ENCODE measurements at regions of chr15 and their contacts with region 1.

Region 1: GRCh38 chr15:91919014-91919534 is 65.6 kb downstream of the SLCO3A1 start:
- DNase-seq: no peak
- ATAC-seq: no peak
- H3K4me3 Mint-ChIP-seq: no peak overlapping the region
- H3K27ac Mint-ChIP-seq: no peak overlapping the region
- H3K4me1 Mint-ChIP-seq: peaks cover 11% of the 10 kb centered on the region
- H3K27me3 Mint-ChIP-seq: no peaks in the 10 kb centered on the region
- CTCF ChIP-seq: no peak

Region 2: GRCh38 chr15:92034227-92034626 is 115.2 kb after region 1 on chr15:
- CTCF ChIA-PET with region 1: no interaction called
- POLR2A ChIA-PET with region 1: no interaction called
- intact Hi-C with region 1: no loop called
- DNase-seq: no peak
- ATAC-seq: no peak
- H3K4me3 Mint-ChIP-seq: no peak overlapping the region
- H3K27ac Mint-ChIP-seq: no peak overlapping the region
- H3K4me1 Mint-ChIP-seq: no peaks in the 10 kb centered on the region
- H3K27me3 Mint-ChIP-seq: no peaks in the 10 kb centered on the region
- CTCF ChIP-seq: no peak

Region 3: GRCh38 chr15:92178911-92179310 is 259.8 kb after region 1 on chr15:
- CTCF ChIA-PET with region 1: no interaction called
- POLR2A ChIA-PET with region 1: interaction called, 11 read pairs
- intact Hi-C with region 1: no loop called
- DNase-seq: no peak
- ATAC-seq: no peak
- H3K4me3 Mint-ChIP-seq: no peak overlapping the region
- H3K27ac Mint-ChIP-seq: no peak overlapping the region
- H3K4me1 Mint-ChIP-seq: no peaks in the 10 kb centered on the region
- H3K27me3 Mint-ChIP-seq: no peaks in the 10 kb centered on the region
- CTCF ChIP-seq: no peak

Region 4: DNA sequence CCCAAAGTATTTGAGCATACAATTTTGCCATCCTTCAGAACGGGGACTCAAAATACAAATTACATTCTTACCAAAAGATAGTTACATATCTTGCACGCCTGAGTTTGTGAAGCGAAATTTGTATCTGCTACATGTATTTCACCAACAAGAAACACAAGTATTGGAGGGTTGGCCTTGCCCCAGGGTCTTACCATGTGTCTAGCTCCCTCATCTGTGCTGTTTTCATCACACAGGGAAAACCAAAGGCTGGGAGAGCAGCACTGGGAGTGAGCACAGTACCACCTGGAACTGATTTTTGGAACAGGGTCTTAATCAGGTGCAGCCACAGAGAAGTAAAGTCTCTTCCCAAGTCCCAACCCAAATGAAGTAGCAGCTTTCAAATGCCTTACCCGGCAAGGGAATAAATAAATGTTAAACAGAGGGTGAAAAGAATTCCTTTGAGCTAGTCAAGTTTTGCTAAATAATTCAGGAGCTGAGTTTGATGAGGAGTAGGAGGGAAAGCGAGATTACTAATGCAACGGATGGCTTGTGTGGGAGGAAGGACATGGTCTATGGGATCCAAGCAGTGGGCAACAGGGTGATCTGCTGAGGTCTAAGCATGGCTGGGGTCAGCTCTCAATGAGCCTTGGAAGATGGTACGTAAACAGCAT is 270.0 kb after region 1 on chr15:
- CTCF ChIA-PET with region 1: no interaction called
- POLR2A ChIA-PET with region 1: no interaction called
- intact Hi-C with region 1: no loop called
- DNase-seq: no peak
- ATAC-seq: no peak
- H3K4me3 Mint-ChIP-seq: no peak overlapping the region
- H3K27ac Mint-ChIP-seq: no peak overlapping the region
- H3K4me1 Mint-ChIP-seq: no peaks in the 10 kb centered on the region
- H3K27me3 Mint-ChIP-seq: no peaks in the 10 kb centered on the region
- CTCF ChIP-seq: no peak